HEK293T (cell line): ENCODE measurements at regions of chr22 and their contacts with region 1.

Region 1: DNA sequence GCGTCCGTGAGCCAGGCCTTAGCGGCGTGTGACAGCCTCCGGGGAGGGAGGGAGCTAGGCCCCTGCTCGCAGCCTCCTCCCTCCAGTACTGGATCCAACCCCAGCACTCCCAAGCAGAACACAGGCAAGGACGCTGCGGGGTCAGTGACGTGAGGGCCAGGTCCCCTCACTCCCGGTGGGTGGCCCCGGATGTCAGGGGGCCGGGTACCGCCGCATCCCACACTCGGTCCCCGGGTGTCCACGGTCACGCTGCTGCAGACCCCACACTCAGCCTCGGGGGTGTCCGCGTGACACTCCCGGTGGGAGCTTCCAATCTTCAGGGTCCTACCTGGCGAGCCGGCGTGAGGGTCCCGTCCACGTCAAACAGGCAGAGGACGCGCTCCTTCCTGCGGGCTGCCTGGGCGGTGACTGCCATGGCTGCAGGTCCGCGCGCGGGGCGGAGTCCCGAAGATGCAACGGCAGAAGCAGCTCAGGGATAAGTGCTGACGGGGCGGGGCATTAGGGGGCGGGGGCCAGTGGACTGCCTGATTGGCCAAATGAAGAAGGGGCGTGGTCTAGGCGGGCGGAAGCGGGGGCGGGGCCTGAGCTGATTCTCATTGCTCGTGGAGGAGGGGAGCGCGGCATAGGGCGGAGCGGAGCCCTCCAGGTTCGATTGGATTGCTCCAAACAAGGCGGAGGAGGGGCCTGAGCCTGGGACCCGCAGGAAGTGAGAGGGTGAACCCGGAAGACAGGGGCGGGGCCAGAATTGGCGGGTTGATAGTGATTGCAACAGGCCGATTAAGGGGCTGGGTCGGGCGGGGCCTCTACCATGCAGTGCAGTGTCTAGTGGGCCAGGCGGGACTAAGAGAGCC is at the start of gene PMM1:
- DNase-seq: peak; percentile 99

Region 2: DNA sequence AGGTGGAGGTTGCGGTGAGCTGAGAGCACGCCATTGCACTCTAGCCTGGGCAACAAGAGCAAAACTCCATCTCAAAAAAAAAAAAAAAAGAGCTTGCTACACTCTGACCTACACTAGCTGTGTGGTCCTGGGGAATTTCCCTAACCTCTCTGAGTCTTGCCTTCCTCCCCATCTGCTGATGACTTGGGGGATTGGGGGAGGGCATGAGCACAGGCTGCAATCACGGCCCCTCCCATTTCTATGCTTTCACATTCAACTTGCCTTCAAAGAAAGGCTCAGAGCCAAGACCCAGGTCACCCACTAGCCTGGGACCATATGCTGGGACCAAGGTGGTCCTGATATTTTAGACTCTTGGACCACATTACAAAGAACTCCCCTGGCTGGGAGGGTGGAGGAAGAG is 247.6 kb before region 1 on chr22:
- CTCF ChIA-PET with region 1: no interaction called
- POLR2A ChIA-PET with region 1: no interaction called
- DNase-seq: no peak

Region 3: GRCh38 chr22:41557401-41558240 is 32.0 kb before region 1 on chr22:
- CTCF ChIA-PET with region 1: interaction called, 3 read pairs
- POLR2A ChIA-PET with region 1: interaction called, 14 read pairs
- DNase-seq: no peak

Region 4: DNA sequence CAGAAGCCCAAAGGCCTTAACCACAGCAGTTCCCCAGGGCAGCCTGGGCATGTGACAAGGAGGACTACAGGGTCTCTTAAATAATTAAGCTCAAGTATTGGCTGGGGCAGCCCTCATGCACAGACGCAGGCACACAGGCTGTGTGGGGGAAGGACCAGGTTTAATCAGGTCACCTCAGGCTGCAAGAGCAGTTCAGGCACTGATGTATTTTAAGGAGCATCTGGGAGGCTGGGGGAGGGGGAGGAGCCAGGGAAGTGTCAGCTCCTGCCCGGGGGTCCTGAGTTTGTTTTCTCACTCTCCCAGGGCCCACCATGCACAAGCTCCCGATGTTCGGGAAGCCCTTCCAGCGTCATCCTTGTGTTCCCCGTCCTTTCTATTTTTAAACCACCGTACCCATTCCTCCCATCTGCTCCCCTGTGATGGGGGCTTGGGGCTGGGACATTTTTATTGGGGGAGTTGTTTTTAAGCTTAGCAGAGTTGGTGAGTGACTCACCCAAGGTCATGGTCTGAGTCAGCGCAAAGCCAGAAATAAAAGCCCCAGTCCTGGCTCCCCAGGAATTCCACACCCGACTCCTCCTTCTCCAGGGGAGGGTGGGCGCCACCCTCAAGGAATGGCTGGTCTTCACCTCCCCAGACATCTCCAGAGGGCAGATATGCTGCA is 26.4 kb before region 1 on chr22:
- CTCF ChIA-PET with region 1: no interaction called
- POLR2A ChIA-PET with region 1: interaction called, 14 read pairs
- DNase-seq: no peak

Region 5: DNA sequence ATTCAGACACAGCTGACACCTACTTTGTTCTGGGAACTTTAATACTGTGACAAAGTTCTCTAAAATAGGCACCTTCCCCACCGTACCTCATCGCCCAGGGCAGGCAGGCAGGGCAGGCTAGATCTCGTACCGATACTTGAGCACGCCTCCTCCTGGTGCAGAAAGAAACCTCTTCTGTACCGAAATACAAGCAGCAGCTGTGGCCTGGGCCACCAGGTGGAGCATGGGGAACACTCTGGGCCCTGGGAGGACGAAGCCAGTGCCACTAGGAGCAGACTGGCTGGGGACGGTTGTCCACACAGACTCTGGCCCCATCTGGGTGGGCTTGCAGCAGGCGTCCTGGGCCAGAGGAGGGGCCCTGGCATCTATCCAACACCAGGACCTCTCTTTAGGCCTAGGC is 12.7 kb before region 1 on chr22:
- CTCF ChIA-PET with region 1: interaction called, 12 read pairs
- POLR2A ChIA-PET with region 1: interaction called, 27 read pairs
- DNase-seq: peak; percentile 78